Activated CD4-positive, alpha-beta T cell treated with anti-CD3 and anti-CD28 coated beads, Interleukin-2, amount 10 ng/mL, durations not matched to agents 24 days and 14 days (primary cell): ENCODE measurements at regions of chr20 and their contacts with region 1.

Region 1: DNA sequence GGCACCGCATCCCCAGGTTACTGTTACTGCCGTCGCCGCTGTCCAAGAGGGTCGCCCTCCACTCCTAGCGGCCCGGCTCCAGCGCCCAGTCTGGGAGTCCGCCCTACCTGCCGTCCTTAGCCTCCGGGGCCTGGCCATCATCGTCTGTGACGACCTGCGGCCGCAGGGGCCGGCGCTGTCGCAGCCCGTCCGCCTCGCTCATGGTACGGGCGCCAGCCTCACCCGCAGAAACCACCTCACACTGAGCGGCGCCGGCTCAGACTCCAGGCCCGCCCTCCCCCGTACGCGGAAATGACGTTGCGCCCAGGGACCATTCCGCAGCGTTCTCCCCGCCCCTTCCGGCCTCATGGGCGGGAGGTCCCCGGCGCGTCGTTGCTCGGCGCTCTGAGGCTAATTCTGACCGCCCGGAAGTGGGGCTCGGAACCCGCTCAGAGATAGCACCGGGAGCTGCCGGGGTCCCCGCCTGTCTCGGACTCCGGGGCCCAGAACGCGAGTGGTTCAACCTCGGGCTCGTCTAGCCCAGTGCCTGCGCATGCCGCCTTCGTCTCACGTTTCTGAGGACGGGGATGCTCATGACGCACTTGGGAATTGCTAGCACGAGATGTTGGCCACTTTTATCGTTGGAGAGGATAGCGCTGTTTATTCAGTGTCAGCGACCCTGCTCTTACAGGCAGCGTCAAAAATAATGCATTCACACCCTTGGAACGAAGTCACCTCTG is at the start of gene APMAP:
- DNase-seq: peak; percentile 99
- H3K4me3 Mint-ChIP-seq: peak within 1 kb of the TSS; percentile 99
- H3K27ac Mint-ChIP-seq: peak within 1 kb of the TSS; percentile 94
- H3K4me1 Mint-ChIP-seq: peaks cover 51% of the 10 kb centered on the region
- H3K27me3 Mint-ChIP-seq: peaks cover 18% of the 10 kb centered on the region
- total RNA-seq, gene APMAP: 56.4 and 56.8 TPM in 2 replicates

Region 2: DNA sequence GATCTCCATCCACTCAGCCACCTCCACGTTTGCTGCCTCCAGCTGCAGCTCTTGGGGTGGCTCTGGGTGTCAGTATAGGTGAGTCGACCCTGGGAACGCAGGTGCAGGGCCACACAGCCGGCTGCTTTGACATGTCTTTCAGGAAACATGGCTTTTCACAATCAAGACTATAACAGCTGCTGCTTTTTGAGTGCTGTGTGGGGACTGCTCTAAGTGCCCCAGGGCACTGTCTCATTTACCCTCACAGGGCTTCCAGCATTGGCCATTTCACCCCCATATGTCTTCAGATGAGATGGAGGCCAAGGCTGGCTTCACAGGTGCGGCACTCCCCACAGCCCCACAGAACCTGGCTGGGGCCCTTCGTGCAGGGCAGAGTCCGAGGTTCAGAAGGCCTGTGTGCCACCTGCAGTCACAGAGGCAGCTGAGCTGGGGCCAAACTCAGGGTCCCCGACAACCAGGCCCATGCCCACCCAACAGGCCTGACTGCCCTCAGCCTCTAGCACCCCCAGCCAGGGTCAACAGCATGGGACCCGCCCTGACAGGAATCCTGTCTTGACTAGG is 58.5 kb before region 1 on chr20:
- intact Hi-C with region 1: loop called (anchors 1 kb)
- DNase-seq: no peak
- H3K4me3 Mint-ChIP-seq: no peak overlapping the region
- H3K27ac Mint-ChIP-seq: no peak overlapping the region
- H3K4me1 Mint-ChIP-seq: peaks cover 45% of the 10 kb centered on the region
- H3K27me3 Mint-ChIP-seq: no peaks in the 10 kb centered on the region

Region 3: GRCh38 chr20:25057234-25058050 is 64.8 kb after region 1 on chr20:
- intact Hi-C with region 1: loop called (anchors 1 kb)
- DNase-seq: peak; percentile 95
- H3K4me3 Mint-ChIP-seq: peak overlapping the region; percentile 78
- H3K27ac Mint-ChIP-seq: peak overlapping the region; percentile 65
- H3K4me1 Mint-ChIP-seq: peaks cover 39% of the 10 kb centered on the region
- H3K27me3 Mint-ChIP-seq: peaks cover 37% of the 10 kb centered on the region

Region 4: DNA sequence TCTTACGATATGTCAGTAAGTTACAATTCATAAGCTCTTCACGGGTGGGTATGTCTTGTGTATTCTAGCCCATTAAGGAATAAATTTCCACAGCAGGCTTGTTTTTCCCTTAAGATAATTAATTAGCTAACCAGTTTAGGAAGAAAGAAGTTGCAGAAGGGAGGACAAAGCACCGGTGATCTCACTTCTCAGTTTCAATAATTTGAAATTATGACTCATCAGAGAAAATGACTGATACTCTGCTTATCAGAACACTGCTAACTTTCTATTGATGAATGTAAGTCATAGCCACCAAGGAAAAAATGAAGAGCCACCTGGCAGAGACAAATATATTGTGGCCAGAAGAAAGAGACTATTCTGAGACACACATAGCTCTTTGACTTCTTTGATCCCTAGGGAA is 167.8 kb after region 1 on chr20:
- intact Hi-C with region 1: loop called (anchors 5 kb)
- DNase-seq: no peak
- H3K4me3 Mint-ChIP-seq: no peak overlapping the region
- H3K27ac Mint-ChIP-seq: peak overlapping the region; percentile 12
- H3K4me1 Mint-ChIP-seq: peaks cover 7% of the 10 kb centered on the region
- H3K27me3 Mint-ChIP-seq: peaks cover 2% of the 10 kb centered on the region

Region 5: DNA sequence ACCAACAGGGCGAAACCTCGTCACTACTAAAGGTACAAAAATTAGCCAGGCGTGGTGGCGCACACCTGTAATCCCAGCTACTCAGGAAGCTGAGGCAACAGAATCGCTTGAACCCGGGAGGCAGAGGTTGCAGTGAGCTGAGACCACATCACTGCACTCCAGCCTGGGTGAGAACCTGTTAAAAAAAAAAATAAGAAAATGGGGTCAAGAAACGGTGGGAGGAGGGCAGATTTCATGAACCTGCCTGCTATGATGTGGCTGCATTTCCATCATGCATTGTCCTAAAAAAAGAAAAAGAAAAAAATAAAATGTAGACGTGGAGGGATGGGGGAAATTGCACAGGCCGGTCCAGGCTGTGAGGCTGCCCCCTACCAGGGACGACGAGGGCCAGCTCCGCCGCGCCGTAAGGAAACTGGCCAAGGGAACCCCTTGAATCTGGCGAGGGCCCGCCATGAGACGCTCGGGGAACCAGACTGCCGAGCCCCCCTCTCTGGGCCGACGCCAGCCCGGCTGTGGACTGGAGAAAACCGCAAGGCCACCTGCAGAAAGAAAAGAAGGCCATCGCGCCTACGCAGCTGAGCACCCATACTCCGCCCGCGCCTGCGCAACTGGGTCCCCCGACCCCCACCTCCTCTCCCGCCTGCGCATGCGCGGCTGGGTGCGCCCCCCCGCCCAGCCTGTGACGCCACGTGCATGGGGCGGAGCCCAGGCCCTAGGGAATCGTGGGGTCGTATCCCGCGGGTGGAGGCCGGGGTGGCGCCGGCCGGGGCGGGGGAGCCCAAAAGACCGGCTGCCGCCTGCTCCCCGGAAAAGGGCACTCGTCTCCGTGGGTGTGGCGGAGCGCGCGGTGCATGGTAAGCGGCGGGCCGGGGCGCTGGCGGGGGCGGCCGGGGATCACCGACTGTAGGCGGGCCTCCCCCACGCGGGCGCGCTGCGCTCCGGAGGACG is 202.6 kb after region 1 on chr20 and contains the start of gene ENTPD6:
- intact Hi-C with region 1: loop called (anchors 1 kb)
- DNase-seq: peak; percentile 98
- H3K4me3 Mint-ChIP-seq: peak within 1 kb of the TSS; percentile 94
- H3K27ac Mint-ChIP-seq: peak within 1 kb of the TSS; percentile 79
- H3K4me1 Mint-ChIP-seq: peaks cover 27% of the 10 kb centered on the region
- H3K27me3 Mint-ChIP-seq: peaks cover 6% of the 10 kb centered on the region
- total RNA-seq, gene ENTPD6: 42.1 and 44.2 TPM in 2 replicates

Region 6: GRCh38 chr20:25310268-25310920 is 317.7 kb after region 1 on chr20:
- intact Hi-C with region 1: loop called (anchors 5 kb)
- DNase-seq: peak; percentile 88
- H3K4me3 Mint-ChIP-seq: peak overlapping the region; percentile 85
- H3K27ac Mint-ChIP-seq: peak overlapping the region; percentile 98
- H3K4me1 Mint-ChIP-seq: peaks cover 31% of the 10 kb centered on the region
- H3K27me3 Mint-ChIP-seq: no peaks in the 10 kb centered on the region

Region 7: GRCh38 chr20:25399037-25399430 is 406.4 kb after region 1 on chr20:
- intact Hi-C with region 1: loop called (anchors 2 kb)
- DNase-seq: peak; percentile 80
- H3K4me3 Mint-ChIP-seq: no peak overlapping the region
- H3K27ac Mint-ChIP-seq: no peak overlapping the region
- H3K4me1 Mint-ChIP-seq: peaks cover under 1% of the 10 kb centered on the region
- H3K27me3 Mint-ChIP-seq: no peaks in the 10 kb centered on the region

Region 8: DNA sequence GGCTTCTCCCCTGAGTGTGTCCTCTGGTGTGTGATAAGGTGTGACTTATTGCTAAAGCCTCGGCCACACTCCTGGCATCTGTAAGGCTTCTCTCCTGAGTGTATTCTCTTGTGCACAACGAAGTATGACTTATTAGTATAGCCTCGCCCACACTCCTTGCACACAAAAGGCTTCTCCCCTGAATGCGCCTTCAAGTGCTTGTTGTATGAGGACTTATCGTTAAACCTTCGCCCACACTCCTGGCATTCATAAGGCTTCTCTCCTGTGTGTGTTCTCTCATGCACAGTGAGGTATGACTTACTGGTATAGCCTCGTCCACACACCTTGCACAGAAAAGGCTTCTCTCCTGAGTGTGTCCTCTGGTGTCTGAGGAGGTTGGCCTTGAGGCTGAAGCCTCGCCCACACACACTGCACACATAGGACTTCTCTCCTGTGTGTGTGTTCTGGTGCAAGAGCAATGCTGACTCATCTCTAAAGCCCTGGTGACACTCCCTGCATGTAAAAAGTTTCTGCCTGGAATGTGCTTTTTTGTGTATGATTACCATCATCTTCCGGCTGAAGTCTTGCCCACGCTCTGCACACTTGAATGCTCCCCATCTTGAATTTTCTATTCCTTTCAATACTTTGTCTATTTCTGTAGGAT is 683.6 kb after region 1 on chr20:
- intact Hi-C with region 1: no loop called
- DNase-seq: no peak
- H3K4me3 Mint-ChIP-seq: no peak overlapping the region
- H3K27ac Mint-ChIP-seq: peak overlapping the region; percentile 39
- H3K4me1 Mint-ChIP-seq: peaks cover 9% of the 10 kb centered on the region
- H3K27me3 Mint-ChIP-seq: no peaks in the 10 kb centered on the region